ENCODE measurements at regions of chr22 and their contacts with region 1.

Region 1: GRCh38 chr22:30802202-30803166 is 107.8 kb downstream of the OSBP2 start:
- DNase-seq: peak; percentile 91
- H3K4me3 Mint-ChIP-seq: peak overlapping the region; percentile 59
- H3K27ac Mint-ChIP-seq: no peak overlapping the region
- H3K4me1 Mint-ChIP-seq: peaks cover 42% of the 10 kb centered on the region
- H3K27me3 Mint-ChIP-seq: peaks cover 16% of the 10 kb centered on the region
- CTCF ChIP-seq: no peak

Region 2: DNA sequence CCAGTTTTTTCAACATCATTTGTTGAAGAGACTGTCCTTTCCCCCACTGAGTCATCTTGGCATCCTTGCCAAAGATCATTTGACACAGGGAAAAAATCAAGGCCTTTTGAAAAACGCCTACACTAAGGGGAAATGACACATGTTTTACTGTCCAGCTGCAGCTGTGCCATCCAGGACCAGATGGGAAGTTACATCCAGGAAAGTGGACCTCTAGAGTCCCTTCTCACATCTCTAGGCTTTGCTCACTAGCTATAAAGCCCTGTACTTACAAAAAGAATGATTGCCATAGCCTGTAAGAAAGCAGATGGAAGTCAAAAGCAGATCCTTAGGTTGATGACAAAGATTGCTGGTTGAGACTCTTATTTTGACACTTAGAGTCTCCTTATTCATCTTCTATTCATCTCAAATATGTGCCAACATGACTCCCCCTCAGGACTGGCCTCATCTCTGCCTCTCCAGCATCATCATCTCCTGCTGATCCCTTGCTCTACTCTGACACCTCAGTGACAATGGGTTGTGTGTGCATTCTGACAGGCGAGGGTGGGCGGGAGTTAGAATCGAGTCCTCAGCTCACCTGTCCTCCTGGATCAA is 85.1 kb before region 1 on chr22:
- CTCF ChIA-PET with region 1: no interaction called
- POLR2A ChIA-PET with region 1: no interaction called
- intact Hi-C with region 1: no loop called
- DNase-seq: peak; percentile 92
- H3K4me3 Mint-ChIP-seq: no peak overlapping the region
- H3K27ac Mint-ChIP-seq: no peak overlapping the region
- H3K4me1 Mint-ChIP-seq: peaks cover 15% of the 10 kb centered on the region
- H3K27me3 Mint-ChIP-seq: no peaks in the 10 kb centered on the region
- CTCF ChIP-seq: no peak

Region 3: DNA sequence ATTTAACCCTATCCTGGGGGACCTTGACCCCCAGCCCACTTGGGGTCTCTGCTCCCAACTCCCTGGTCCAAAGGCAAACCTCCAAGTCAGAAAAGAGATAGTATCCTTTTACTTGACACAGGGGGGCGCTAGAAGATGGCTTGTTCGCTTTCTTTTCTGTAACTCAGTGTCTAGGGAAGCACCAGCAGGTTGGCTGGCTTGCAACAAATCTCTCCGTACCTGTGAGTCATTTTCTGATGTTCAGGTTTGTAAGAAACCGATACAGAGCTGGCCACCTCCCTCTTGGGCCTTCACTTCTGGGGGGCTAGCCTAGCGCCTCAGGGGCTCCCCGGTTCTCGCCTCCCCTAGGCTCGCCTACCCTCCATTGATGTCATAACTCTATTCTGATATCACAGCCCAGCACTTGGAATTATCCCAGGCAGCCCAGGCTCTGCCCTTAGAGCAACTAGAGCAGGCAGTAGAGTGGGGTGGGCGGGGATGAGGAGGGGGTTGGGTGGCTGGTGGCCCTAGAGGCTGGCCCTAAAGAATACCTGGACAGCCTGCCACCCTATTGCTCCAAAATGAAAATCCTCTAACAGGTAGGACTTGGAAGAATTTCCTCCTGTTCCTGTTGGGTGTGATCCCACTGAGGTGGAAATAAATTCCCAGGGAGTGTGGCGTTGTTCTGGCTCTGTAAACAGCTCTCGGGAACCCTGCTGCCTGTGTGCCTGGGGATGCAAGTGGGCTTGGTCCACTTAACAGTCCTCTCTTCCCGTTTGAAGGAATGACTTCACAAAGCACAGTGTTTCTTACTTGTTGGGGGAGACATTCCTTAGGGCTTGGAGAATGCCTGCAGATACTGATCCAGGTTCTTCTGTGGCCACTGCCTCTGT is 38.4 kb before region 1 on chr22:
- CTCF ChIA-PET with region 1: interaction called, 11 read pairs
- POLR2A ChIA-PET with region 1: interaction called, 6 read pairs
- intact Hi-C with region 1: loop called (anchors 1 kb)
- DNase-seq: peak; percentile 91
- H3K4me3 Mint-ChIP-seq: no peak overlapping the region
- H3K27ac Mint-ChIP-seq: peak overlapping the region; percentile 10
- H3K4me1 Mint-ChIP-seq: peaks cover 10% of the 10 kb centered on the region
- H3K27me3 Mint-ChIP-seq: no peaks in the 10 kb centered on the region
- CTCF ChIP-seq: peak; percentile 71

Region 4: GRCh38 chr22:30781271-30781875 is 21.1 kb before region 1 on chr22:
- CTCF ChIA-PET with region 1: no interaction called
- POLR2A ChIA-PET with region 1: no interaction called
- intact Hi-C with region 1: no loop called
- DNase-seq: peak; percentile 35
- H3K4me3 Mint-ChIP-seq: no peak overlapping the region
- H3K27ac Mint-ChIP-seq: peak overlapping the region; percentile 28
- H3K4me1 Mint-ChIP-seq: peaks cover 6% of the 10 kb centered on the region
- H3K27me3 Mint-ChIP-seq: no peaks in the 10 kb centered on the region
- CTCF ChIP-seq: no peak

Region 5: GRCh38 chr22:30822216-30823014 is 19.9 kb after region 1 on chr22:
- CTCF ChIA-PET with region 1: interaction called, 11 read pairs
- POLR2A ChIA-PET with region 1: interaction called, 38 read pairs
- intact Hi-C with region 1: no loop called
- DNase-seq: no peak
- H3K4me3 Mint-ChIP-seq: peak overlapping the region; percentile 65
- H3K27ac Mint-ChIP-seq: no peak overlapping the region
- H3K4me1 Mint-ChIP-seq: peaks cover 32% of the 10 kb centered on the region
- H3K27me3 Mint-ChIP-seq: no peaks in the 10 kb centered on the region
- CTCF ChIP-seq: no peak

Region 6: DNA sequence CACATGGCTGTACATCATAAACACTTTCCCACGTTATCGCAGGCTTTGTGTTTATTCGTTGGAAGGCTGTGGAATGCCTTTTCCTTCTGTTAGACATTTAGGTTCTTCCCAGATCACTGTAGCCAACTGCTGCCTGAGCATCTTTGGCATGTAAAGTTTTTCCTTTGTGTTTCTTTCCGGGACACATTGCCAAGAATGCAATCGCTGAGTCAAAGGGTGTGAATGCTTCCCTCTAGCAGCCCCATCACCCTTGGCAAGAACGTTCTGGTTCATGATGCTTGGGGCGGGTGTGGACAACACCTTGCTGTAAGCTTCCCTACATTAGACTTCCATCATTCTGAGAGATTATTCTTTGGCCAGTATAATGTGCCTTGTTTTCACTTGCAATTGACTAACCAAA is 28.4 kb after region 1 on chr22:
- CTCF ChIA-PET with region 1: interaction called, 3 read pairs
- POLR2A ChIA-PET with region 1: interaction called, 38 read pairs
- intact Hi-C with region 1: loop called (anchors 1 kb)
- DNase-seq: peak; percentile 99
- H3K4me3 Mint-ChIP-seq: peak overlapping the region; percentile 67
- H3K27ac Mint-ChIP-seq: peak overlapping the region; percentile 98
- H3K4me1 Mint-ChIP-seq: peaks cover 60% of the 10 kb centered on the region
- H3K27me3 Mint-ChIP-seq: no peaks in the 10 kb centered on the region
- CTCF ChIP-seq: no peak

Region 7: DNA sequence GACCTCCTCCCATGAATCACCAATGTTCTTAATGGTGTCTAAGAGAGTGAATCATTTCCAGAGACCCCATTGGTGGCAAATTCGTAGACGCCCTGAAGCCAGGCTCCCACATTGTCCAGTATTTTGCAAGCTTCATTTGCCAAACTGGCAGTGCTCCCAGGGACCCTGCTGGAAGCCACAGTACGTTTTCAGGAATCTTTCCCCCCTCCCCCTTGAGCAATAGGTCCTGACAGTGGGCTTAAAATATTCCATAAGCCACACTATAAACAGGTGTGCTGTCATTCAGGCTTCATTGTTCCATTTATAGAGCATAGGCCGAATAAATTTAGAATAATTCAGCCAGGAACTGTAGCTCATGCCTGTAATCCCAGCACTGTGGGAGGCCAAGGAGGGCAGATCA is 40.8 kb after region 1 on chr22:
- CTCF ChIA-PET with region 1: interaction called, 4 read pairs
- POLR2A ChIA-PET with region 1: interaction called, 37 read pairs
- intact Hi-C with region 1: loop called (anchors 5 kb)
- DNase-seq: peak; percentile 98
- H3K4me3 Mint-ChIP-seq: no peak overlapping the region
- H3K27ac Mint-ChIP-seq: peak overlapping the region; percentile 97
- H3K4me1 Mint-ChIP-seq: peaks cover 40% of the 10 kb centered on the region
- H3K27me3 Mint-ChIP-seq: no peaks in the 10 kb centered on the region
- CTCF ChIP-seq: no peak

Region 8: GRCh38 chr22:30890686-30891442 is 88.4 kb after region 1 on chr22:
- CTCF ChIA-PET with region 1: interaction called, 12 read pairs
- POLR2A ChIA-PET with region 1: interaction called, 3 read pairs
- intact Hi-C with region 1: loop called (anchors 5 kb)
- DNase-seq: peak; percentile 57
- H3K4me3 Mint-ChIP-seq: no peak overlapping the region
- H3K27ac Mint-ChIP-seq: no peak overlapping the region
- H3K4me1 Mint-ChIP-seq: no peaks in the 10 kb centered on the region
- H3K27me3 Mint-ChIP-seq: no peaks in the 10 kb centered on the region
- CTCF ChIP-seq: peak; percentile 76